ENCODE measurements at regions of chr3 and their contacts with region 1.

Region 1: DNA sequence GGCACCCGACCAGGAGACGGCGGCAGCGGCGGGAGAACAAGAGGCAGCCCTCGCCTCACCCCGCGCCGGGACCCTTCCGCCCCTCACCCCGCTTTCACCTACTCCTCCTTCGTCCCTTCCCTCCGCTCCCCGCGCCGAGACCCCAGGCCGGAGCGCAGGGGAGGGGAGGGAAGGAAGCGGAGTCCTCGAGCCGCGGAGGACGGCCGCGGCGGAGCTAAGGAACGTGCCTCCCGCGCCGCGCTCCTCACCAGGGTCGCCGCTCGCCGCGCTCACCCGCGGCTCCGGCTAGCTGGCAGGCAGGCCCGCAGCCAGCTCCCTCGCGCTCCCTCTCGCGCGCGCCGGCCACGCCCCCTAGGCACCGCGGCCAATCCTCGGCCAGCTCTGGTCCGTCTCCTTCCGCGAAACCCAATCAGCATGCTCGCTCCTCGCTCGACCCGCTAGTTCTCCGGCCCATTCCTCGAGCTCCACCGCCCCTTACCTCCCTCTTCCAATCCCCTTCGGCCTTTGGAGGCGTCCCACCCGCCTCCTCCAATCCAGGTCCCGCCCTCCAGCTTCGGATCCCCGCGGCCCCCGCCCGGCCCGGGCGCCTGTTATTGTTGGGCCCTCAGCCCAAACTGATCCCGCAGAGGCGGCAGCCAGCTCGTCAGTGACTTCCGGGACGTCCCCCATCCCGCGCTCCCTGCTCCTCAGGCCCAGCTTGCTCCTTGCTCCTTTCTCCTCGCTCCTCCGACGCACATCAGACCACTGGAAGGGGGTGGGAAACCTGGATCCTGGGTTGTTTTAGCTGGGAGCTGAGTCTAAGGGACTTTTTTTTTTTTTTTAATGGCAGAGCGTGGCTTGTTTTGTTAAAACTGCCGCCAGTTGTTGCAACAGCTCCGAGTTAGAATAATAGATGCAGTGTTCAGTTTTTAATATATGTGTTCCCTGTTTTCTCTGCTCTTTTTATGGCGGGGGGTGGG is at the start of gene DCBLD2:
- DNase-seq: peak; percentile 97
- ATAC-seq: peak; percentile 97
- H3K4me3 ChIP-seq: peak within 1 kb of the TSS; percentile 87 to 98 (median 88)
- H3K27ac ChIP-seq: peak within 1 kb of the TSS; percentile 85
- H3K4me1 ChIP-seq: peaks cover 38% of the 10 kb centered on the region
- H3K27me3 ChIP-seq: no peaks in the 10 kb centered on the region; a peak in 1 of 5 replicates
- CTCF ChIP-seq: no peak
- EP300 ChIP-seq: peak in 1 of 2 experiments; percentile 27; a peak in 1 of 4 replicates
- POLR2A ChIP-seq: peak; percentile 93
- RAD21 ChIP-seq: no peak; the same call in 1 of the 2 replicates
- total RNA-seq, gene DCBLD2: 40.2 and 56.9 TPM in 2 replicates

Region 2: GRCh38 chr3:98593046-98593936 is 308.4 kb before region 1 on chr3 and contains the start of gene CPOX:
- CTCF ChIA-PET with region 1: no interaction called
- POLR2A ChIA-PET with region 1: interaction called, 11 read pairs
- in situ Hi-C with region 1: no loop called
- intact Hi-C with region 1: loop called (anchors 5 kb)
- DNase-seq: peak; percentile 96
- ATAC-seq: peak; percentile 98
- H3K4me3 ChIP-seq: peak within 1 kb of the TSS; percentile 66 to 85 (median 82)
- H3K27ac ChIP-seq: peak within 1 kb of the TSS; percentile 66
- H3K4me1 ChIP-seq: peaks cover 51% of the 10 kb centered on the region
- H3K27me3 ChIP-seq: no peaks in the 10 kb centered on the region
- CTCF ChIP-seq: peak; percentile 23
- EP300 ChIP-seq: peak in 1 of 2 experiments; percentile 60; a peak in 2 of 4 replicates
- POLR2A ChIP-seq: peak; percentile 13 to 66; a peak in 3 of 4 replicates
- RAD21 ChIP-seq: no peak; the same call in 1 of the 2 replicates
- total RNA-seq, gene CPOX: 35.2 and 37.2 TPM in 2 replicates

Region 3: DNA sequence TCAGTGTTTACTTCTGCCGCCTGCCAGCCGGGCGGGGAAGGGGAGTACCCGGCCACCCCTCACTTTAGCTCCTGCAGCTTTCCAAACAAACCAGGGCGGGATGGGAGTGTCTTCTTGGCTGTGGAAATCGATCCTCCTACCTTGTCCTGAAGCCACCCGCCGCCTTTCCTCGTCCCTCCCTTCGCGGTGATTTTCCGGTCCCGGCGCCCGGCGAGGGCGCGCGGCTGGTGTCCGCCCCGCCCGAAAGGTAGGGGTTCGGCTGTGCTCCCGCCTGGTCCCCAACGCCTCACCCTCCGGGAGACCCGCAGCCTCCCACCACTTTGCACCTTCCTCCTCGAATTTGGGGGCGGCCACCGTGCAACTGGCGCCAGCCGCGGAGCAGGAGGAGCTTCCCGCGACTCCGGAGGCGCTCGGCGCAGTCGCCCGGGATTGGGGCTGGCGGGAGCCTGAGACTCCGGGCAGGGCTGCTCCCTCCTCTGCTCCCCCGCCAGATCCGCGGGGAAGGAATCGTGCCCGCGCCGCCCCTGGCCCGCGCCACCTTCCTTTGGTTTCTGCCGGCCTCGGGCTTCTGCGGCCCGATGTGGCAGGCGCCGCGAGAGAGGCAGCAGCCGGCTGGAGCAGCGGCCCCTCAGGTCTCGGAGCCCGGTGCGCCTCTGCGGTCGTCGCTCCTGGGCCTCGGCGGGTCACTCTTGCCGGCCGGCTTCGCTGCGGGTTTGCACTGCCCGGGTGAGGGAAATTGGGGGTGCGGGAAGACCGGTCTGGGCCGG is 169.2 kb before region 1 on chr3:
- CTCF ChIA-PET with region 1: no interaction called
- POLR2A ChIA-PET with region 1: interaction called, 5 read pairs
- in situ Hi-C with region 1: no loop called
- intact Hi-C with region 1: loop called (anchors 2 kb)
- DNase-seq: peak; percentile 82
- ATAC-seq: peak; percentile 85
- H3K4me3 ChIP-seq: peak overlapping the region; percentile 87 to 94 (median 92)
- H3K27ac ChIP-seq: peak overlapping the region; percentile 94
- H3K4me1 ChIP-seq: peaks cover 53% of the 10 kb centered on the region
- H3K27me3 ChIP-seq: no peaks in the 10 kb centered on the region; a peak in 1 of 5 replicates
- CTCF ChIP-seq: 0 out of 2 replicates have a peak, but pooled peaks have one; percentile 16
- EP300 ChIP-seq: peak in 1 of 2 experiments; percentile 31; a peak in 1 of 4 replicates
- POLR2A ChIP-seq: peak; percentile 62 to 70; a peak in 3 of 4 replicates
- RAD21 ChIP-seq: no peak

Region 4: DNA sequence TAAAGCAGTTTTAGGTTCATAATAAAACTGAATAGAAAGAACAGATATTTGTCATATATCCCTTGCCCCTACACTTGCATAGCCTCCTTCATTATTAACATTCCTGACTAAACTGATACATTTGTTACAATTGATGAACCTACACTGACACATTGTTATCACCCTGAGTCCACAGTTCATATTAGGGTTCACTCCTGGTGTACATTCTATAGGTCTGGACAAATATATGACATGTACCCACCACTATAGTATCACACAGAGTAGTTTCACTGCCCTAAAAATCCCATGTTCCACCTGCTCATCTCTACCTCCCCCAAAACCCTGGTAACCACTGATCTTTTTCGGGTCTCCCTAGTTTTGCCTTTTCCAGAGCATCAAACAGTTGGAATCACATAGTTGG is 14.0 kb before region 1 on chr3:
- CTCF ChIA-PET with region 1: no interaction called
- POLR2A ChIA-PET with region 1: interaction called, 12 read pairs
- in situ Hi-C with region 1: no loop called
- intact Hi-C with region 1: no loop called
- DNase-seq: peak; percentile 42
- ATAC-seq: peak; percentile 84
- H3K4me3 ChIP-seq: no peak overlapping the region
- H3K27ac ChIP-seq: peak overlapping the region; percentile 15
- H3K4me1 ChIP-seq: peaks cover 36% of the 10 kb centered on the region
- H3K27me3 ChIP-seq: no peaks in the 10 kb centered on the region; a peak in 1 of 5 replicates
- CTCF ChIP-seq: no peak
- EP300 ChIP-seq: no peak
- POLR2A ChIP-seq: no peak
- RAD21 ChIP-seq: no peak

Region 5: DNA sequence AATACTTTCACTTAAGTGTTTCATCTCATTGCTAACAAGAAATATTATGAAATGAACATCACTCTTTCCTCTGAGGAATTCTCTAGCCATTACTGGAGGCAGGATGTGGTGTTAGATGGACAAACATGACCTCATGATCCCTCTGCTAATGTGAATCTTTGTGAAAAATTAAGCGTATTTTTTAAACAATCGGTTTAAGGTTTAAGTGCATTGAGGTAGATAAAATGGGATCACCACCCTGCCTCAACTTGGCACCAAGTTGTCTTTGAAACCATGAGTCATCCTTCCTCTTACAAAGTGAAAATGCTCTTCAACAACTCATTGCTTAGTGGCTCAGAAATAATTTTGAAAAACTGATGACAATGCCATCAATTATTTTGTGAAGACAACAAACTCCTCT is 75.8 kb after region 1 on chr3:
- CTCF ChIA-PET with region 1: no interaction called
- POLR2A ChIA-PET with region 1: interaction called, 4 read pairs
- in situ Hi-C with region 1: no loop called
- intact Hi-C with region 1: loop called (anchors 5 kb)
- DNase-seq: peak; percentile 75
- ATAC-seq: no peak
- H3K4me3 ChIP-seq: no peak overlapping the region
- H3K27ac ChIP-seq: no peak overlapping the region
- H3K4me1 ChIP-seq: peaks cover 16% of the 10 kb centered on the region
- H3K27me3 ChIP-seq: no peaks in the 10 kb centered on the region
- CTCF ChIP-seq: no peak
- EP300 ChIP-seq: no peak
- POLR2A ChIP-seq: no peak
- RAD21 ChIP-seq: no peak

Region 6: DNA sequence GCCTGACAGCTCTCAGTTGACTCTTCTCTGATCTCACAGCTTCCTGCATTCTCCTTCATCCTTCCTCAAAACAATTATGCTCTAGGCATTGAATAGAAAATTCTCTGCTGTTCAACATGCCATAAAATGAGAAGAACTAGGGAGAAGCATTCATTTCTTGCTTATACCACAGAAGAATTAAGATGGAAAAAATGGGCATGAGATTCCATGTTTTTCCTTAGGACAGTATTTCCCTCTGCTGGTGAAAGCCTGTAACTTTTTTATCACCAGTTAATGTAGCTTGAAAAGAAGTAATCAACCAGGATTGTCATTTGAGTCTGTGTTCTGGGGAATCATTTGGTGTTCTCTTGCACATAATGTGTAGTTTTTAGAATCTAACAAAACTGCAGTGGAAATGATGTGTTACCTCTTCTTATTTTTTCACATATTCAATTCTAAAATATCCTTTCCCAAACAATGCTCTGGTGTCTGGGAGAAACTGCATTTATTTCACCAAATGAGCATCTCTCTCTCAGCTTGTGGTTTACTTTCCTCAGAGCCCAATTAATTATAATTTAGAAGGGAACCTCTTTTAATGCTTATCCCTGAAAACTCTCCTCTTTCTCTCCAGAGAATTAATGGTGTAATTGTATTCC is 92.6 kb after region 1 on chr3:
- CTCF ChIA-PET with region 1: no interaction called
- POLR2A ChIA-PET with region 1: no interaction called
- in situ Hi-C with region 1: loop called (anchors 10 kb)
- intact Hi-C with region 1: loop called (anchors 5 kb)
- DNase-seq: peak; percentile 34
- ATAC-seq: peak; percentile 57
- H3K4me3 ChIP-seq: no peak overlapping the region
- H3K27ac ChIP-seq: no peak overlapping the region
- H3K4me1 ChIP-seq: no peaks in the 10 kb centered on the region
- H3K27me3 ChIP-seq: no peaks in the 10 kb centered on the region; a peak in 1 of 5 replicates
- CTCF ChIP-seq: peak; percentile 62
- EP300 ChIP-seq: no peak
- POLR2A ChIP-seq: no peak
- RAD21 ChIP-seq: peak; percentile 29; the same call in 1 of the 2 replicates

Region 7: DNA sequence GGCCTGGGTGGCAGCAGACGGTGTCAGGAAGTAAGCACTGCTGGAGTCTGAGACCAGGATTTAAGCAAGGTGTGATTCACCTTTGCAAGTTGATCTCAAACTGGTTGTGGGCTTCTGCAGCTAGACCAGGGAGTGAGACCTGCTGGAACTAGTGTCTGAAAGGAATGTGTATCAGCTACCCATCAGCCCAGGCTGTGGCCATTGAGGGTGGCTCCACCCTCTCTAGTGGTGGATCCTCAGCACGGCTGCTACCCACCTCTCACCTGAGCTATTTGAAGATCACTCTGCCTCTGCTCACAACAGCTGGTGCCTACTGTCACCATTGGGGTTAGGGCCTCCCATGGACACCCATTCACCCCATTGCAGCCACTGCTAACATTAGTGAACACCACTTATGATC is 140.1 kb after region 1 on chr3:
- CTCF ChIA-PET with region 1: no interaction called
- POLR2A ChIA-PET with region 1: no interaction called
- in situ Hi-C with region 1: no loop called
- intact Hi-C with region 1: no loop called
- DNase-seq: no peak
- ATAC-seq: no peak
- H3K4me3 ChIP-seq: no peak overlapping the region
- H3K27ac ChIP-seq: no peak overlapping the region
- H3K4me1 ChIP-seq: no peaks in the 10 kb centered on the region
- H3K27me3 ChIP-seq: no peaks in the 10 kb centered on the region
- CTCF ChIP-seq: no peak
- EP300 ChIP-seq: no peak
- POLR2A ChIP-seq: no peak
- RAD21 ChIP-seq: no peak